Endothelial cell of umbilical vein (primary cell): ENCODE measurements at regions of chr6 and their contacts with region 1.

Region 1: GRCh38 chr6:79750806-79751205 is 119.7 kb downstream of the SH3BGRL2 start:
- DNase-seq: no peak
- H3K4me3 ChIP-seq: no peak overlapping the region
- H3K27ac ChIP-seq: no peak overlapping the region
- H3K4me1 ChIP-seq: peaks cover 10% of the 10 kb centered on the region
- H3K27me3 ChIP-seq: no peaks in the 10 kb centered on the region
- CTCF ChIP-seq: no peak
- POLR2A ChIP-seq: no peak

Region 2: GRCh38 chr6:79762370-79762769 is 11.6 kb after region 1 on chr6:
- CTCF ChIA-PET with region 1: interaction called, 10 read pairs
- POLR2A ChIA-PET with region 1: no interaction called
- dilution Hi-C with region 1: no loop called
- intact Hi-C with region 1: no loop called
- DNase-seq: peak; percentile 11
- H3K4me3 ChIP-seq: no peak overlapping the region
- H3K27ac ChIP-seq: no peak overlapping the region
- H3K4me1 ChIP-seq: peaks cover 4% of the 10 kb centered on the region
- H3K27me3 ChIP-seq: no peaks in the 10 kb centered on the region
- CTCF ChIP-seq: peak; percentile 14 to 36
- POLR2A ChIP-seq: no peak